CD4-positive, alpha-beta T cell (primary cell): ENCODE measurements at regions of chr17 and their contacts with region 1.

Region 1: GRCh38 chr17:40559954-40560591 is 5.2 kb downstream of the CCR7 start:
- DNase-seq: peak; percentile 74 to 90 (median 80)
- ATAC-seq: peak; percentile 33
- H3K4me3 ChIP-seq: peak overlapping the region; percentile 97
- H3K4me3 Mint-ChIP-seq: peak overlapping the region; percentile 91
- H3K27ac ChIP-seq: peak overlapping the region; percentile 92 to 100
- H3K27ac Mint-ChIP-seq: peak overlapping the region; percentile 92
- H3K4me1 ChIP-seq: peaks cover 97% of the 10 kb centered on the region
- H3K4me1 Mint-ChIP-seq: peaks cover 90% of the 10 kb centered on the region
- H3K27me3 ChIP-seq: no peaks in the 10 kb centered on the region
- H3K27me3 Mint-ChIP-seq: no peaks in the 10 kb centered on the region
- CTCF ChIP-seq: peak; percentile 97

Region 2: DNA sequence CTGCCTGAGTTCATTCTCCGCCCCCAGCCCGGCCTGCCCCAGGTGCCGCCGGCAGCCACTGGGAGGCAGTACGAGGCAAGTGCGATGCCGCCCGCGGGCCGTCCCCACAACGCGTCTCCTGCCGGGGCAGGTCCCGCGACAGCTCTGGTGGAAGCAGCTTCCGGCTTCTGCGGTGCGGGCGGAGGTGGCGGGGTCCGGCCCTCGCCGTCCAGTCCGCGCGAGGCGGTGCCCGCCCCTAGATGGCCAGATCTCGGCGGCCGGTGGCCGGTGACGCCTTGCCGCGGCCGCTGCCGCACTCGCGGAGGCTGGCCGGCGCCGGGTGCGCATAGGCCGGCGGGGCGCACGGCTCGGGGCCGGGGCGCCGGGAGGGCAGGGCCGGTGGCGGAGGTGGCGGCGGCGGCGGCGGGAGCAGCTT is 197.4 kb before region 1 on chr17:
- CTCF ChIA-PET with region 1: interaction called, 11 read pairs
- POLR2A ChIA-PET with region 1: interaction called, 3 read pairs
- intact Hi-C with region 1: loop called (anchors 1 kb)
- DNase-seq: peak; percentile 68 to 87 (median 74)
- ATAC-seq: peak; percentile 82
- H3K4me3 ChIP-seq: peak overlapping the region; percentile 36
- H3K4me3 Mint-ChIP-seq: peak overlapping the region; percentile 14
- H3K27ac ChIP-seq: no peak overlapping the region
- H3K27ac Mint-ChIP-seq: no peak overlapping the region
- H3K4me1 ChIP-seq: peaks cover 23% of the 10 kb centered on the region
- H3K4me1 Mint-ChIP-seq: peaks cover 16% of the 10 kb centered on the region
- H3K27me3 ChIP-seq: peaks cover 0 to 13% of the 10 kb centered on the region in 2 experiments
- H3K27me3 Mint-ChIP-seq: peaks cover 17% of the 10 kb centered on the region
- CTCF ChIP-seq: peak; percentile 56

Region 3: GRCh38 chr17:40443583-40444327 is 116.3 kb before region 1 on chr17:
- CTCF ChIA-PET with region 1: interaction called, 11 read pairs
- POLR2A ChIA-PET with region 1: interaction called, 6 read pairs
- intact Hi-C with region 1: loop called in 1 of 2 experiments (anchors 1 kb)
- DNase-seq: peak; percentile 41 to 84 (median 66)
- ATAC-seq: peak; percentile 76
- H3K4me3 ChIP-seq: peak overlapping the region; percentile 62
- H3K4me3 Mint-ChIP-seq: peak overlapping the region; percentile 89
- H3K27ac ChIP-seq: no peak overlapping the region
- H3K27ac Mint-ChIP-seq: peak overlapping the region; percentile 85
- H3K4me1 ChIP-seq: peaks cover 46% of the 10 kb centered on the region
- H3K4me1 Mint-ChIP-seq: peaks cover 37% of the 10 kb centered on the region
- H3K27me3 ChIP-seq: no peaks in the 10 kb centered on the region
- H3K27me3 Mint-ChIP-seq: peaks cover 6% of the 10 kb centered on the region
- CTCF ChIP-seq: peak; percentile 63

Region 4: GRCh38 chr17:40542558-40543411 is 17.3 kb before region 1 on chr17:
- CTCF ChIA-PET with region 1: interaction called, 147 read pairs
- POLR2A ChIA-PET with region 1: interaction called, 668 read pairs
- intact Hi-C with region 1: loop called in 1 of 2 experiments (anchors 1 kb)
- DNase-seq: peak in 5 of 14 experiments; percentile 32 to 80 (median 45)
- ATAC-seq: no peak
- H3K4me3 ChIP-seq: no peak overlapping the region
- H3K4me3 Mint-ChIP-seq: peak overlapping the region; percentile 72
- H3K27ac ChIP-seq: peak overlapping the region in 1 of 2 donors; percentile 79
- H3K27ac Mint-ChIP-seq: peak overlapping the region; percentile 94
- H3K4me1 ChIP-seq: peaks cover 94% of the 10 kb centered on the region
- H3K4me1 Mint-ChIP-seq: peaks cover 83% of the 10 kb centered on the region
- H3K27me3 ChIP-seq: no peaks in the 10 kb centered on the region
- H3K27me3 Mint-ChIP-seq: no peaks in the 10 kb centered on the region
- CTCF ChIP-seq: no peak

Region 5: GRCh38 chr17:40598663-40599467 is 38.8 kb after region 1 on chr17:
- CTCF ChIA-PET with region 1: interaction called, 288 read pairs
- POLR2A ChIA-PET with region 1: interaction called, 1,290 read pairs
- intact Hi-C with region 1: loop called in 1 of 2 experiments (anchors 1 kb)
- DNase-seq: peak in 13 of 14 experiments; percentile 38 to 94 (median 65)
- ATAC-seq: peak; percentile 47
- H3K4me3 ChIP-seq: peak overlapping the region; percentile 24
- H3K4me3 Mint-ChIP-seq: peak overlapping the region; percentile 71
- H3K27ac ChIP-seq: peak overlapping the region; percentile 95 to 99
- H3K27ac Mint-ChIP-seq: peak overlapping the region; percentile 98
- H3K4me1 ChIP-seq: peaks cover 78% of the 10 kb centered on the region
- H3K4me1 Mint-ChIP-seq: peaks cover 95% of the 10 kb centered on the region
- H3K27me3 ChIP-seq: no peaks in the 10 kb centered on the region
- H3K27me3 Mint-ChIP-seq: no peaks in the 10 kb centered on the region
- CTCF ChIP-seq: no peak

Region 6: DNA sequence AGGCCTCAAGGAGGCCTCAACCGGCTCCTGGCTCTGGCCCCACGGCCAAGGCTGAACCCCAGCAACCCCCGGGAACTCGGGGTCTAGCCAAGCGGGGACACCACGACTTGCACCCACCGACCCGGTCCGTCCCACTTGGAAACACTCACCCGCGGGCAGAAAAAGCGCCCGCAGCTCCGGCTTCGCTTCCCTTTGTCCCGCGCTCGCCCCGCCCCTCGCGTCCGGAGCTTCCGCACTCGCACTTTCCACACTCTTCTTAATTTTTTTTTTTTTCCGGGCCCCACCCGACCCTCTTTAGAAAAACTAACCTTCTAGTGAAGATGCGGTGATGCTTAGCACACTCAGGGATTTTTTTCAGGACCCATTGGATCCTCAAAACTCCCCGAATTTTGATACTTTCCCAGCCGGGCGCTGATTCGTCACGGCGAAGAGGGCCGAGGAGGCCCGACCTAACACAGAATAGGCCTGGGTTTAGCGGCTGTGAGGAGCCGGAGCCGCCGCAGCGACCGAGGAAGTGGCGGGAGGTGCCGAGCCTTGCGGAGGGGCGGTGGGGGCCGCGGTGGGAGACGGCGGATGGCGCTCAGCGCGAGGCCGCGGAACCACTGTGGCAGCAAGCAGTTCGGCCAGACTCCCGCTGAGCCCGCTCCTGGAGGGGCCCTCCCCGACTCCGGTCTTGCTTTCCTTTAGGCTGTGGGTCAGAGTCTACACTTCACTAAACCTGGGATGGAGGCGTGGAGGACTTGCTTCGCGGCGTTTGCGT is 87.7 kb after region 1 on chr17 and contains the start of gene SMARCE1:
- CTCF ChIA-PET with region 1: interaction called, 3 read pairs
- POLR2A ChIA-PET with region 1: interaction called, 37 read pairs
- intact Hi-C with region 1: no loop called
- DNase-seq: peak; percentile 52 to 87 (median 67)
- ATAC-seq: peak; percentile 66
- H3K4me3 ChIP-seq: peak within 1 kb of the TSS; percentile 89
- H3K4me3 Mint-ChIP-seq: peak within 1 kb of the TSS; percentile 93
- H3K27ac ChIP-seq: peak within 1 kb of the TSS; percentile 95 to 98
- H3K27ac Mint-ChIP-seq: peak within 1 kb of the TSS; percentile 97
- H3K4me1 ChIP-seq: peaks cover 19% of the 10 kb centered on the region
- H3K4me1 Mint-ChIP-seq: peaks cover 51% of the 10 kb centered on the region
- H3K27me3 ChIP-seq: no peaks in the 10 kb centered on the region
- H3K27me3 Mint-ChIP-seq: no peaks in the 10 kb centered on the region
- CTCF ChIP-seq: no peak
- total RNA-seq, gene SMARCE1: 65.4 to 68.6 TPM